Mammary epithelial cell (primary cell): ENCODE measurements at regions of chr19 and their contacts with region 1.

Region 1: GRCh38 chr19:42380155-42380554 is 9.9 kb downstream of the CNFN start:
- DNase-seq: no peak
- H3K4me3 ChIP-seq: no peak overlapping the region
- H3K27ac ChIP-seq: no peak overlapping the region
- H3K4me1 ChIP-seq: peaks cover 5% of the 10 kb centered on the region
- H3K27me3 ChIP-seq: no peaks in the 10 kb centered on the region
- CTCF ChIP-seq: no peak

Region 2: GRCh38 chr19:42440357-42441048 is 60.3 kb after region 1 on chr19:
- CTCF ChIA-PET with region 1: no interaction called
- dilution Hi-C with region 1: loop called (anchors 5 kb)
- in situ Hi-C with region 1: no loop called
- intact Hi-C with region 1: no loop called
- DNase-seq: peak; percentile 38
- H3K4me3 ChIP-seq: no peak overlapping the region
- H3K27ac ChIP-seq: no peak overlapping the region
- H3K4me1 ChIP-seq: no peaks in the 10 kb centered on the region
- H3K27me3 ChIP-seq: no peaks in the 10 kb centered on the region
- CTCF ChIP-seq: peak; percentile 89 to 96

Region 3: DNA sequence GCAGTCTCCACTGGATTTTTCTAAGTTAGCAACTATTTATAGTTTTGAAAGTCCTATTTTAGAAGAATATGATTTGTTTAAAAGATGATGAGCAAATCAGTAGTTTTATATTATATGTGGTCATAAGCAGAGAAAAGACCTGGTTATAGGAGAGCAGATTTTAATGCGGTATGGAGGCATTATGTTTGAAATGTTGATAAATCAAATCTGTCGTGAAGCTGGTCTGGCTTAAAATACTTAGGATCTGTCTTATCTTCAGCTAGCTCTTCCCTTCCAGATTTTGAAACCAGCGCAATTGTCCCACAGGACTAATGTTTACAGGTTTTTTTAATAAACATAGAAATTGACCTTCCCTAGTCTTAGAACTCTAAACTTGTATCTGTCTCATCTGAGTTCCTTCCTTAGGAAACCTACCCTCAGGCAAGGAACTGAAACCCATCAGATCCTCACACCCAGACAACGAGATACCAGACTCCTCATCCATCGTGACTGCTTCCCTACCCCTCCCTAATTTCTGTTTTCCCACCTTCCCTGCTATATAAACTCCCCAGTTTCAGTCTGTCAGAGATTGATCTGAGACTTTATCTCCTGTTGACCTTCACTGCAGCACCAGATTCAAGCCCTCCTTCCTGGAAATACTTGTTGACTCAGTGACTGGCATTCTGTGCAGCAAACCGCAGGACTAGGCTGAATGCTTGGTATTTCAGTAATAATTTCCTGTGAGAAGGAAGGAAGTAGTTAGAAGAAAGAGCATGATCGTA is 100.4 kb after region 1 on chr19:
- CTCF ChIA-PET with region 1: no interaction called
- dilution Hi-C with region 1: no loop called
- in situ Hi-C with region 1: no loop called
- intact Hi-C with region 1: no loop called
- DNase-seq: no peak
- H3K4me3 ChIP-seq: no peak overlapping the region
- H3K27ac ChIP-seq: no peak overlapping the region
- H3K4me1 ChIP-seq: peaks cover 4% of the 10 kb centered on the region
- H3K27me3 ChIP-seq: no peaks in the 10 kb centered on the region
- CTCF ChIP-seq: no peak

Region 4: DNA sequence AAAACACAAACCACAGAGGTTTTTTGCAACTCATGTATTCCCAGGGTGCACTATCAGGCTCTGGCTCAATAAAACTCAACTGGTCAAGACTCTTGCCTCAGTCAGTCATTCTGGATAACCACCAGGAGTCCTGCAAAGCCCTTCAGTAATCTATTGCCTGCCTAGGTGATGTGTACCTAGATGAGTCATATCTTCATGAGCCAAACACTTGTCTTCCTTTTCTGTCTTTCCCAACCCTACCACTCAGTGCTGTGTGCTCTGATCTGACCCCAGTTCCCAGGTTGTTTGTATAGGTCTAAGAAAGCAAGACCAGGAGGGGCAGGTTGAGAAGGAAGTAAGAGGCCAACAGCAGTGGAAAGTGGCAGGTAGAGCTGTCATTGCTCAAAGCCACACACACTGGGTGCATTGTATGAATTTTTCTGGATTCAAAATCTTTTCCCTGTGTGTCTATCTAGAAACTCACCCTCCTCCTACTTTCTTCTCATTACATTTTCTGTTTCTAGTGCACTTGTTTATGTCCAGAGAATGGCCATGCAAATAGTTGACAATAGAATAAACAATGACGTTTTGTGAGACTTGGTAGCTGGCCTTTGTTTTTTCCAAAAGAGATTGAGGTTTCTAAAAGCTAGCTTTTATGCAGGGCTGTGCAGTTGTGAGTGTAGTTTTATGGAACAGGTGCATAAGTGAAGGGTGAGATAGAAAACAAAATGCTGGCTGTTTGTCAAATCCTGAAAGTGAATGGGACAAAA is 451.3 kb after region 1 on chr19:
- CTCF ChIA-PET with region 1: no interaction called
- dilution Hi-C with region 1: no loop called
- in situ Hi-C with region 1: no loop called
- intact Hi-C with region 1: no loop called
- DNase-seq: peak; percentile 85
- H3K4me3 ChIP-seq: no peak overlapping the region
- H3K27ac ChIP-seq: peak overlapping the region; percentile 71
- H3K4me1 ChIP-seq: peaks cover 36% of the 10 kb centered on the region
- H3K27me3 ChIP-seq: no peaks in the 10 kb centered on the region
- CTCF ChIP-seq: peak; percentile 21 to 65